Caco-2 (cell line): ENCODE measurements at regions of chr1 and their contacts with region 1.

Region 1: DNA sequence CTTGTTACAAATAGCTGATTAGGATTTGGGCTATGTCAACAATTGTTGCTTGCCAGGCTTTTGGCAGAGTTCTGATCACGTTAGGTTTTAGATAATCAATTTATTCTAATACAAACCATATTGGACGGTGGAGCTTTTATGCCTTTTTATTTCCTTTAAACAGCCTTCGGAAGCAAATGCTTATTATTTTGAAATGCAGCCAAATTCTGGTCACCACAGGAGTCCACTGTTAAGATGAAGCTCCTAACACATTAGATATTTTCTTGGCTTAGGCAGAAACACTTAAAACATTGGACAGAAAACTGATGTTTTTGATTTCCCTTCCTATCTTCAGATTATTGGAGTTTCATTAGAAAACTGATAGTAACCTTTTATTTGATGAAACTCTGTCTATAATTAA is 82.9 kb downstream of the CENPF start:
- DNase-seq: no peak
- H3K4me3 ChIP-seq: no peak overlapping the region
- H3K4me3 Mint-ChIP-seq: no peak overlapping the region
- H3K27ac Mint-ChIP-seq: peak overlapping the region; percentile 30
- H3K4me1 ChIP-seq: peaks cover 34% of the 10 kb centered on the region
- H3K4me1 Mint-ChIP-seq: peaks cover 32% of the 10 kb centered on the region
- H3K27me3 ChIP-seq: no peaks in the 10 kb centered on the region
- H3K27me3 Mint-ChIP-seq: no peaks in the 10 kb centered on the region
- CTCF ChIP-seq: no peak

Region 2: GRCh38 chr1:214833178-214833756 is 147.4 kb after region 1 on chr1:
- CTCF ChIA-PET with region 1: no interaction called
- POLR2A ChIA-PET with region 1: no interaction called
- intact Hi-C with region 1: loop called (anchors 1 kb)
- DNase-seq: peak; percentile 42 to 54
- H3K4me3 ChIP-seq: no peak overlapping the region
- H3K4me3 Mint-ChIP-seq: no peak overlapping the region
- H3K27ac Mint-ChIP-seq: no peak overlapping the region
- H3K4me1 ChIP-seq: peaks cover 6% of the 10 kb centered on the region; the same call in 1 of the 2 replicates
- H3K4me1 Mint-ChIP-seq: peaks cover 17% of the 10 kb centered on the region
- H3K27me3 ChIP-seq: no peaks in the 10 kb centered on the region
- H3K27me3 Mint-ChIP-seq: no peaks in the 10 kb centered on the region
- CTCF ChIP-seq: no peak